Caco-2 (cell line): ENCODE measurements at regions of chr9 and their contacts with region 1.

Region 1: DNA sequence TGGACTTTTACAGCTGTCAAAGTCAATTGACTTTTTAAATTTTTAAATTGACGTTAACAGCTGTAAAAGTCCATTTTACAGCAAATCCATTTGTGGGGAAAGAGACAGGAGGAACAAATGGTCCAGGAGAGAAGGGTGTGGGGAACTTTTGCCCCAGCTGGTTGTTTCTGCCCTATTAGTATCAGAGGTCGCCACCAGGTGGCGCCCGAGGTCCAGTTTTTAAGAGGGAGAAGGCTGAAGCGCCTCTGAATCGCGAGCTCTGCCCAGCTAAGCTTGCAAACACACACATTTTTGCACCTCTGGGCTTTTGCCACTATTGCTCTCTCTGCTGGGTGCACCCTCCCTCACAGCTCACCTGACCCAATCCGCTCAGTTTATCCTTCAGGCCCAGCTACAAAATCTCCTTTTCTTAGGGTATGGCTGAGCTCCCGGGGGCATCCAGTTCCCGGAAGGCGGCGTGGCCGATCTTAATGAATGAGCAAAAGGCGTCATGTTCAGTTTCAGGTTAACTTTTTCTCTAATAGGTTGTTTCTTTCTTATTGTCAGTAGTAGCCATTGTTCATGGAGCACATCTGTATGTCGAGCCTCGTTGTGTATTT is 6.3 kb upstream of the TTLL11 start:
- DNase-seq: peak; percentile 76 to 82
- H3K4me3 ChIP-seq: no peak overlapping the region
- H3K4me3 Mint-ChIP-seq: no peak overlapping the region
- H3K27ac Mint-ChIP-seq: no peak overlapping the region
- H3K4me1 ChIP-seq: no peaks in the 10 kb centered on the region
- H3K4me1 Mint-ChIP-seq: no peaks in the 10 kb centered on the region
- H3K27me3 ChIP-seq: no peaks in the 10 kb centered on the region
- H3K27me3 Mint-ChIP-seq: peaks cover 9% of the 10 kb centered on the region
- CTCF ChIP-seq: peak; percentile 78 to 81

Region 2: DNA sequence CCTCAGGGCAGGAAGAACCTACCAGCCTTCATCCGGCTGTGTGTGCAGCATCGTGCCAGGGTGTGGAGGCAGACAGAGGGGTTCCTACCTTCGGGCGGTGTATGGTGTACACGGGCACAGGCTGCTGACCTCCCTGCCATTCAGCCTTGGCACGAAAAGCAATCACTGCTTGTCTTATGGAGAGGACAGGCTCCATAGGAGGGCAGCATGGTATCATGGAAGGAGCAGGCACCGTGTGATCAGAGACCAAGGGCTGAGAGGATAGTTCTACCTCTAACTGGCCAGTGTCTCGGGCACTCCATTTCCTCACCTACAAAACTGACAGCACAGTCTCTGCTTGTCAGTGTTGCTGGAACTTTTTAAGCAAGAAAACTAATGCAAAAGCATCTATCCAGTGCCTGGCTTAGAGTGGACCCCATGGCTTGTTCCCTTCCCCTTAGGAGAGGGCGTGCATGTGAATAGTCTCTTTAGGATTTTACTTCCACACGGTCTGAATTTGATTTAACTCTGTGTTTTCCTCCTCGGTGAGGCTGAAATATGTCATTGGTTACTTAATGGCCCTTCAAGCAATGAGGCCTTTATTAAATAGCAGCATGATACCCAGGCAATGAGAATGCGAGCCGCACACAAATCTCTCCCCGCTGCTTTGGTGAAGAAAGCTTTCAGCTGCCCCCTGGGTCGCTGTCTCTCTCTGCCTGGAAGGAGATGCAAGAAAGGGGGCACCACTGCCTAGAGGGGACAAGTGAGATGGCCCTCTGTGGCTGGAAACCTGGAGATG is 28.5 kb before region 1 on chr9:
- CTCF ChIA-PET with region 1: no interaction called
- POLR2A ChIA-PET with region 1: no interaction called
- intact Hi-C with region 1: no loop called
- DNase-seq: no peak
- H3K4me3 ChIP-seq: no peak overlapping the region
- H3K4me3 Mint-ChIP-seq: no peak overlapping the region
- H3K27ac Mint-ChIP-seq: no peak overlapping the region
- H3K4me1 ChIP-seq: no peaks in the 10 kb centered on the region
- H3K4me1 Mint-ChIP-seq: no peaks in the 10 kb centered on the region
- H3K27me3 ChIP-seq: no peaks in the 10 kb centered on the region
- H3K27me3 Mint-ChIP-seq: no peaks in the 10 kb centered on the region
- CTCF ChIP-seq: no peak

Region 3: GRCh38 chr9:122116040-122116439 is 16.7 kb after region 1 on chr9:
- CTCF ChIA-PET with region 1: interaction called, 175 read pairs
- POLR2A ChIA-PET with region 1: no interaction called
- intact Hi-C with region 1: no loop called
- DNase-seq: no peak
- H3K4me3 ChIP-seq: no peak overlapping the region
- H3K4me3 Mint-ChIP-seq: no peak overlapping the region
- H3K27ac Mint-ChIP-seq: no peak overlapping the region
- H3K4me1 ChIP-seq: no peaks in the 10 kb centered on the region
- H3K4me1 Mint-ChIP-seq: no peaks in the 10 kb centered on the region
- H3K27me3 ChIP-seq: no peaks in the 10 kb centered on the region
- H3K27me3 Mint-ChIP-seq: peaks cover 3% of the 10 kb centered on the region
- CTCF ChIP-seq: no peak

Region 4: DNA sequence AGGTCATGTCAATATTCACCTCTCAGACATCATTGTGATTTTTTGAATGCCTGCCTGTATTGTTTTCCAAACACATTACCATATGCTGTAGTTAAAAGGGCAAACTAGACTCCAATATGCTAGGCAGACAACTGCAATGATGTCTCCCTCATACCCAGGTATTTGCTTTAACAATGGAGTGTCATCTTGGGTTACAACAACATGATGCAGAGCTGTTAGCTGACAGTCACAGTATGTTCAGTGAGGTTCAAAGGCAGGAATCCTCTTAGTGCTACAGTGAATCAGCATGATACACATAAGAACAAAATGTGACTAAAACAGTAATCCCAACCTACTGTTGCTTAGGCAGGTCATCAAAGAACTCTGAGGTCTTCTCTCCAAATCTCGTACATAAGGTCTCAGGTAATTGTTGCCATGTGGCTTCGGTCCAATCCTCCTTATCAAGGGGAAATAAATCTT is 354.3 kb after region 1 on chr9:
- CTCF ChIA-PET with region 1: no interaction called
- POLR2A ChIA-PET with region 1: no interaction called
- intact Hi-C with region 1: loop called (anchors 5 kb)
- DNase-seq: no peak
- H3K4me3 ChIP-seq: no peak overlapping the region
- H3K4me3 Mint-ChIP-seq: no peak overlapping the region
- H3K27ac Mint-ChIP-seq: no peak overlapping the region
- H3K4me1 ChIP-seq: no peaks in the 10 kb centered on the region
- H3K4me1 Mint-ChIP-seq: no peaks in the 10 kb centered on the region
- H3K27me3 ChIP-seq: no peaks in the 10 kb centered on the region
- H3K27me3 Mint-ChIP-seq: peaks cover 5% of the 10 kb centered on the region
- CTCF ChIP-seq: no peak